HepG2 (cell line): ENCODE measurements at regions of chr7 and their contacts with region 1.

Region 1: GRCh38 chr7:92245487-92246362 is at the starts of genes ANKIB1 and KRIT1:
- DNase-seq: peak; percentile 86
- ATAC-seq: peak; percentile 92
- H3K4me3 ChIP-seq: peak within 1 kb of the TSS; percentile 79 to 98 (median 93)
- H3K27ac ChIP-seq: peak within 1 kb of the TSS; percentile 99
- H3K4me1 ChIP-seq: peaks cover 35% of the 10 kb centered on the region
- H3K27me3 ChIP-seq: no peaks in the 10 kb centered on the region; a peak in 1 of 5 replicates
- CTCF ChIP-seq: peak; percentile 20; the same call in 1 of the 2 replicates
- EP300 ChIP-seq: no peak; a peak in 1 of 4 replicates
- POLR2A ChIP-seq: peak; percentile 67 to 69
- RAD21 ChIP-seq: peak; percentile 52
- total RNA-seq, gene ANKIB1: 26.6 and 29.6 TPM in 2 replicates
- total RNA-seq, gene KRIT1: 29.4 and 31.2 TPM in 2 replicates

Region 2: GRCh38 chr7:92134271-92135051 is 111.3 kb before region 1 on chr7 and contains the start of gene CYP51A1:
- CTCF ChIA-PET with region 1: no interaction called
- POLR2A ChIA-PET with region 1: interaction called, 4 read pairs
- in situ Hi-C with region 1: no loop called
- intact Hi-C with region 1: loop called (anchors 1 kb)
- DNase-seq: peak; percentile 84
- ATAC-seq: peak; percentile 91
- H3K4me3 ChIP-seq: peak within 1 kb of the TSS; percentile 95 to 100 (median 98)
- H3K27ac ChIP-seq: peak within 1 kb of the TSS; percentile 98
- H3K4me1 ChIP-seq: peaks cover 47% of the 10 kb centered on the region
- H3K27me3 ChIP-seq: no peaks in the 10 kb centered on the region; a peak in 1 of 5 replicates
- CTCF ChIP-seq: peak; percentile 28; the same call in 1 of the 2 replicates
- EP300 ChIP-seq: no peak; a peak in 1 of 4 replicates
- POLR2A ChIP-seq: peak; percentile 84 to 93
- RAD21 ChIP-seq: peak; percentile 45; the same call in 1 of the 2 replicates
- total RNA-seq, gene CYP51A1: 194 and 260 TPM in 2 replicates

Region 3: GRCh38 chr7:92206019-92206418 is 39.7 kb before region 1 on chr7:
- CTCF ChIA-PET with region 1: no interaction called
- POLR2A ChIA-PET with region 1: no interaction called
- in situ Hi-C with region 1: no loop called
- intact Hi-C with region 1: no loop called
- DNase-seq: no peak
- ATAC-seq: peak; percentile 59; the same call in 2 of the 3 replicates
- H3K4me3 ChIP-seq: no peak overlapping the region
- H3K27ac ChIP-seq: no peak overlapping the region
- H3K4me1 ChIP-seq: no peaks in the 10 kb centered on the region
- H3K27me3 ChIP-seq: no peaks in the 10 kb centered on the region
- CTCF ChIP-seq: no peak
- EP300 ChIP-seq: no peak
- POLR2A ChIP-seq: no peak
- RAD21 ChIP-seq: no peak

Region 4: DNA sequence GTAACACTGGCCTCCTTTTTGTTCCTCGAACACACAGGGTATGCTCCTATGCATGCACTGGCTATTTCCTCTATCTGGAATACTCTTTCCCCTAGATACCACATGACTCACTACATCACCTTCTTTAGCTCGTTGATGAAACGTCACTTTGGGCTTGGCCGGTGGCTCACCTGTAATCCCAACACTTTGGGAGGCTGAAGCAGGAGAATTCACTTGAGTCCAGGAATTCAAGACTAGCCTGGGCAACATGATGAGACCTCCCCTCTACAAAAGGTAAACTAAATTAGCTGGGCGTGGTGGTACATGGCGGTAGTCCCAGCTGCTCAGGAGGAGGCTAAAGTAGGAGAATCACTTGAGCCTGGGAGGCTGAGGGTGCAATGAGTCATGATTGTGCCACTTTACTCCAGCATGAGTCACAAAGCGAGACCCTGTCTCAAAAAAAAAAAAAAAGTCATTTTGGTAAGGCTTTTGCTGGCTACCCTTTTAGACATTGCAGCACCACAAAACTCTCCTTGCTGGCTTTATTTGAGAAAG is 14.6 kb after region 1 on chr7:
- CTCF ChIA-PET with region 1: no interaction called
- POLR2A ChIA-PET with region 1: no interaction called
- in situ Hi-C with region 1: no loop called
- intact Hi-C with region 1: no loop called
- DNase-seq: no peak
- ATAC-seq: no peak
- H3K4me3 ChIP-seq: no peak overlapping the region
- H3K27ac ChIP-seq: no peak overlapping the region
- H3K4me1 ChIP-seq: no peaks in the 10 kb centered on the region
- H3K27me3 ChIP-seq: no peaks in the 10 kb centered on the region
- CTCF ChIP-seq: no peak
- EP300 ChIP-seq: no peak
- POLR2A ChIP-seq: no peak
- RAD21 ChIP-seq: no peak

Region 5: GRCh38 chr7:92292981-92293380 is 47.3 kb after region 1 on chr7:
- CTCF ChIA-PET with region 1: no interaction called
- POLR2A ChIA-PET with region 1: no interaction called
- in situ Hi-C with region 1: no loop called
- intact Hi-C with region 1: loop called (anchors 1 kb)
- DNase-seq: no peak
- ATAC-seq: no peak
- H3K4me3 ChIP-seq: no peak overlapping the region
- H3K27ac ChIP-seq: no peak overlapping the region
- H3K4me1 ChIP-seq: peaks cover 11% of the 10 kb centered on the region
- H3K27me3 ChIP-seq: no peaks in the 10 kb centered on the region; a peak in 1 of 5 replicates
- CTCF ChIP-seq: no peak
- EP300 ChIP-seq: no peak
- POLR2A ChIP-seq: no peak
- RAD21 ChIP-seq: no peak

Region 6: DNA sequence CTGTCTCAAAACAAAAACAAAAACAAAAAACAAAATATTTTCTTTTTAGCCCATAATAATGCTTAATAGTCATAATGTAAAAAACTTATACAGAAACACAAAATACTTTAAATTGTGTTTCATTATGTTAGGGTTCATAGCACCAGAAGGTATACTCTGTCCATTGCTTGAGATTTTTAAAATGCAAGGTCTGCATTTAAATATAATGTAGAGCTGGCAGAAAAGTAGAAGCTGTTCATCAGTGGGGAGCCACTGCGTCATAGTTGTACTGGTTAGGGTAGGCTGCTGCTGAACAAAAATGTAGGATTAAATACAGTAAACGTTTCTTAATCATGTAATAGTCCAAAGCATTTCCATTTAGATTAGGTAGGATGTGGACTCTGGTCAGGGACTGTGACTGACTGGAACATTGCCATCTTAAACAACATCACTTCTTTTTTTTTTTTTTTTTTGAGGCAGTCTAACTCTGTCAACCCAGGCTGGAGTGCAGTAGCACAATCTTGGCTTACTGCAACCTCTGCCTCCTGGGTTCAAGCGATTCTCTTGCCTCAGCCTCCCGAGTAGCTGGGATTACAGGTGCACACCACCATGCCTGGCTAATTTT is 85.2 kb after region 1 on chr7:
- CTCF ChIA-PET with region 1: no interaction called
- POLR2A ChIA-PET with region 1: no interaction called
- in situ Hi-C with region 1: no loop called
- intact Hi-C with region 1: loop called (anchors 5 kb)
- DNase-seq: peak; percentile 53
- ATAC-seq: peak; percentile 83
- H3K4me3 ChIP-seq: no peak overlapping the region
- H3K27ac ChIP-seq: no peak overlapping the region
- H3K4me1 ChIP-seq: peaks cover 15% of the 10 kb centered on the region
- H3K27me3 ChIP-seq: no peaks in the 10 kb centered on the region
- CTCF ChIP-seq: no peak
- EP300 ChIP-seq: no peak
- POLR2A ChIP-seq: no peak
- RAD21 ChIP-seq: no peak

Region 7: GRCh38 chr7:92456236-92456635 is 210.5 kb after region 1 on chr7:
- CTCF ChIA-PET with region 1: no interaction called
- POLR2A ChIA-PET with region 1: no interaction called
- in situ Hi-C with region 1: no loop called
- intact Hi-C with region 1: no loop called
- DNase-seq: no peak
- ATAC-seq: no peak
- H3K4me3 ChIP-seq: no peak overlapping the region
- H3K27ac ChIP-seq: no peak overlapping the region
- H3K4me1 ChIP-seq: peaks cover 6% of the 10 kb centered on the region
- H3K27me3 ChIP-seq: no peaks in the 10 kb centered on the region
- CTCF ChIP-seq: no peak
- EP300 ChIP-seq: no peak
- POLR2A ChIP-seq: no peak
- RAD21 ChIP-seq: no peak